CD4-positive, alpha-beta memory T cell (primary cell): ENCODE measurements at regions of chr1 and their contacts with region 1.

Region 1: DNA sequence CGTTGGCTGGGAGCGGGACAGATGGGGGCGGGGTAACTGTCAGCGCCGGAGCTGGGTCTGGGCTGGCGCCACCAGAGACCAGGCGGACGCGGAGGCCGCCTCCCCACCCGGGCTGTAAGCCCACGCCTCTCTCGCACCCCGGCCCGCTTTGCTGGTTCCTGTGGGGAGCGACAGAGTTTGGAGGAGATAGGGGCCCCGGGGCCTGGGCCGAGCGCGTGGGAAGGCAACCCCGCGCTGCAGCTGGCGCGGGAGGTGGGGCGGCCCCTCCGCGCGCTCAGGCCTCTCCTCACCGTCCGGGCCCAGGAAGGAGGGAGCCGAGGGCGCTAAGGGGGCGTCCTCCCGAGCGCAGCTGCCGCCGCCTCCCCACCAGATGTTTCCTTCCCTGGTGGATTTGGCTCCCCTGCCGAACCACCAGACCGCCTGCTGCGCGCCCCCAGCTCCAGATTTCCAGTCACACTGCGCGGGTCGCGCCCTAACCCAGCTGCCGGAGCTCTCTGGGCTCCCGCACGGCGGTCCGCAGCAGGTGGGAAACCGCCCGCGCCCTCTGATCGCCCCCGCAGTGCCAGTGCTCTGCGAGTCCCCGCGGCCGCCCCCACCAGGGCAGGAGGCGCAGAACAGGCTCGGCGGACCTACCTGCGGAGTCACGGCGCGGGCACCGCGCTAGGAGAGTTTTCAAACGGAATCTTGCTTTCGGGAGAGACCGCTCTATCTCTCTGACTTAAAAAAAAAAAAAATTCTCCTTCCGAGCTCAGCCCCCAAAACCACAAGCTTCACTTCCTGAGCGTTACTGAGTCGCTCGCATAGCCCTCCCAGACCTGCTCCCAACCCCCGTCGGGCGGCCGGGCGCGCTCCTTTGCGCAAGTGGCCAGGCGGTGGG is 1.1 kb downstream of the GFI1 start:
- DNase-seq: peak; percentile 73 to 85 (median 77)
- H3K4me3 ChIP-seq: peak overlapping the region; percentile 84 to 92
- H3K4me3 Mint-ChIP-seq: peak overlapping the region; percentile 89 to 97 (median 94)
- H3K27ac ChIP-seq: peak overlapping the region; percentile 52
- H3K27ac Mint-ChIP-seq: peak overlapping the region; percentile 88 to 94 (median 91)
- H3K4me1 ChIP-seq: peaks cover 30% of the 10 kb centered on the region
- H3K4me1 Mint-ChIP-seq: peaks cover 14 to 69% (median 31%) of the 10 kb centered on the region in 4 donors
- H3K27me3 ChIP-seq: no peaks in the 10 kb centered on the region
- H3K27me3 Mint-ChIP-seq: no peaks in the 10 kb centered on the region

Region 2: DNA sequence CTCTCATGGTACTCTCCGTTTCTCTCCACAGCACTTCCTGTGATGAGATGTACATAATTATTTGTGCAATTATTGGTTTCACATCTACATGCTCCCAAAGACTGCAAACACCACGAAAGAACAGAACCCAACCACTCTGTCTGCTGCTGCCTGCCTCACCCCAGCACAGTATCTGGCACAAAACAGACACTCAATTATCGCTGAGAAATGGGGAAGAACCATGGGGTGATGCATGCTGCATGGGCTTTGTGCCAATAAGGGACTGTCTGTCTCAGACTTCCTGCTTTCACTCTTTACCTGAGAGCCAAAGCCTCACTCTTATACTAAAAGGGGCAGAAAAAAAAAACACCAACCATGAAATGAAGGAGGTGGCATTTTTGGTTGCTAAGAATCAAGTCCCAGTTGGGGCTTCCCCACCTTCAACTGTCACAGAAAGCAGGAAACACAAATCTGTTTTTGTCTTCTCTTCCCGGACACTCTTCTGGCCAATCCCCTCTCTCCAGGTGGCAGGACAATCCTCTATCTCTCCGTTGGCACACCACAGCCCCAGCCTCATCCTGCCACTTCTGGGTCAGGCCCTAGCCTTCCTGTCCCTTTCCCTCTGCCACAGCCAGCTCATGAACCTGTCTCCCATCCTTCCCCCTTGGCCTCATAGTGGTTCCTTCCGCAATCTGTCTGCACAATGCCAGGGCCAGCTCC is 681.6 kb before region 1 on chr1:
- CTCF ChIA-PET with region 1: no interaction called
- POLR2A ChIA-PET with region 1: interaction called, 3 read pairs
- intact Hi-C with region 1: loop called (anchors 10 kb)
- DNase-seq: peak; percentile 87 to 92 (median 89)
- H3K4me3 ChIP-seq: peak overlapping the region; percentile 27 to 61
- H3K4me3 Mint-ChIP-seq: peak overlapping the region; percentile 73 to 90 (median 80)
- H3K27ac ChIP-seq: peak overlapping the region; percentile 98
- H3K27ac Mint-ChIP-seq: peak overlapping the region; percentile 97 to 100 (median 100)
- H3K4me1 ChIP-seq: peaks cover 49% of the 10 kb centered on the region
- H3K4me1 Mint-ChIP-seq: peaks cover 44 to 66% (median 51%) of the 10 kb centered on the region in 4 donors
- H3K27me3 ChIP-seq: no peaks in the 10 kb centered on the region
- H3K27me3 Mint-ChIP-seq: no peaks in the 10 kb centered on the region

Region 3: DNA sequence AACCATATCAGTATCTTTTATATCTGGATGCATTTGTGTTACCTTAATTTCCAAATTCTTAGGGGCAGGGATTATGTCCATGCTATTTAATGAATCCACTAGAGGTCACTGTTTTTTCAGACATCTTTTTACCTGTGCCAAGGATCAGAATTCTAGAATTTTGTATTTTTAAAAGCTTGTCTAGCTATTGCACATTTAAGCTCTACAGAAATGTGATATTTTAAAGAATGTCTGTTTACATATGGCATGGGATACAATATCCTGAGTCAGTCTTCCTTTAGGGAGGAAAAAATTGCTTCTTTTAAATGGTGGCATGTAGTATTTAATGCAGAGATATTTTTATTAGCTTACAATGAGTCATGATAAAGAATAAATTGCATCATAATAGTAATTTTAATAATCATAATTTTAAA is 175.4 kb before region 1 on chr1:
- CTCF ChIA-PET with region 1: interaction called, 135 read pairs
- POLR2A ChIA-PET with region 1: interaction called, 154 read pairs
- intact Hi-C with region 1: no loop called
- DNase-seq: peak in 4 of 5 donors; percentile 34 to 44 (median 40)
- H3K4me3 ChIP-seq: no peak overlapping the region
- H3K4me3 Mint-ChIP-seq: peak overlapping the region in 1 of 8 donors; percentile 36
- H3K27ac ChIP-seq: no peak overlapping the region
- H3K27ac Mint-ChIP-seq: peak overlapping the region in 2 of 7 donors; percentile 47 to 72
- H3K4me1 ChIP-seq: peaks cover 32% of the 10 kb centered on the region
- H3K4me1 Mint-ChIP-seq: peaks cover 21 to 37% (median 31%) of the 10 kb centered on the region in 4 donors
- H3K27me3 ChIP-seq: no peaks in the 10 kb centered on the region
- H3K27me3 Mint-ChIP-seq: no peaks in the 10 kb centered on the region

Region 4: GRCh38 chr1:92447033-92447681 is 38.5 kb before region 1 on chr1:
- CTCF ChIA-PET with region 1: no interaction called
- POLR2A ChIA-PET with region 1: no interaction called
- intact Hi-C with region 1: no loop called
- DNase-seq: no peak
- H3K4me3 ChIP-seq: no peak overlapping the region
- H3K4me3 Mint-ChIP-seq: no peak overlapping the region
- H3K27ac ChIP-seq: no peak overlapping the region
- H3K27ac Mint-ChIP-seq: peak overlapping the region in 1 of 7 donors; percentile 33
- H3K4me1 ChIP-seq: no peaks in the 10 kb centered on the region
- H3K4me1 Mint-ChIP-seq: peaks cover 2 to 9% (median 6%) of the 10 kb centered on the region in 4 donors
- H3K27me3 ChIP-seq: no peaks in the 10 kb centered on the region
- H3K27me3 Mint-ChIP-seq: no peaks in the 10 kb centered on the region

Region 5: DNA sequence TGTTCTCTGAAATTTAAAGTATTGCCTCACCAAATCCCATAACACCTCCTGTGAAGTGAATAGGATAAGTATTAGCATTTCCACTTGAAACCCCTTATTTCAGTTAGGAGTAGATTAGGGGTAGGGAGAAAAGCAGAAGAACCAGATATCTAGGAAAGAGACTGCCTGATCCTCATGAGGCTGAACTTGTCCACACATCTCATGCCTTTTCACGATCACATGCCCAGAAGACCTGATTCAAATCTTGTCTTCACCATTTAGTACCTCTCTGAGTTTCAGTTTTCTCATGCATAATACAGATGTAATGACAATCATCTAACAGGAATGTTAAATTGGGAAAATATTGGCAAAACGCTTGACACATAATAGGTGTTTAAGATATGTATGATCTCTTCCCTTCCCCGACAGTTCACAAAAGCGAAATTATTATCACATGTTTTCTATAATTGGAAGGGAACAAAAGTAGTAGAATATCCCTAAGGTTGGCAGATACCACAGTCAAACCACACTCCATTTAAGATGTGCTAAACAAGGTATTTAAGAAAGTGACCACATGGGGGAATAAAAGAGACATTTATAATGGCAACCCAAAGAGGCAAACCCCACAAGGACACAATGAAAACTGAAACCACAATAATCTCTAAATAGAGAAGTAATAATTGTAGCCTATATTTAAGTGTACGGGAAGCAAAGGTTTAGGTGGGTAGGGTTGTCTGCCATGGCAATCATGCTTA is 24.1 kb before region 1 on chr1:
- CTCF ChIA-PET with region 1: interaction called, 7 read pairs
- POLR2A ChIA-PET with region 1: interaction called, 14 read pairs
- intact Hi-C with region 1: no loop called
- DNase-seq: no peak
- H3K4me3 ChIP-seq: no peak overlapping the region
- H3K4me3 Mint-ChIP-seq: peak overlapping the region in 1 of 8 donors; percentile 50
- H3K27ac ChIP-seq: no peak overlapping the region
- H3K27ac Mint-ChIP-seq: no peak overlapping the region
- H3K4me1 ChIP-seq: peaks cover 33% of the 10 kb centered on the region
- H3K4me1 Mint-ChIP-seq: peaks cover 26 to 54% (median 34%) of the 10 kb centered on the region in 4 donors
- H3K27me3 ChIP-seq: no peaks in the 10 kb centered on the region
- H3K27me3 Mint-ChIP-seq: no peaks in the 10 kb centered on the region

Region 6: GRCh38 chr1:92536980-92537884 is 51.6 kb after region 1 on chr1:
- CTCF ChIA-PET with region 1: interaction called, 42 read pairs
- POLR2A ChIA-PET with region 1: interaction called, 153 read pairs
- intact Hi-C with region 1: loop called (anchors 1 kb)
- DNase-seq: peak; percentile 70 to 84 (median 75)
- H3K4me3 ChIP-seq: no peak overlapping the region
- H3K4me3 Mint-ChIP-seq: peak overlapping the region; percentile 58 to 83 (median 75)
- H3K27ac ChIP-seq: peak overlapping the region; percentile 46
- H3K27ac Mint-ChIP-seq: peak overlapping the region; percentile 66 to 91 (median 85)
- H3K4me1 ChIP-seq: peaks cover 35% of the 10 kb centered on the region
- H3K4me1 Mint-ChIP-seq: peaks cover 39 to 71% (median 53%) of the 10 kb centered on the region in 4 donors
- H3K27me3 ChIP-seq: no peaks in the 10 kb centered on the region
- H3K27me3 Mint-ChIP-seq: no peaks in the 10 kb centered on the region

Region 7: GRCh38 chr1:92831762-92832536 is 346.3 kb after region 1 on chr1 and contains the start of gene RPL5:
- CTCF ChIA-PET with region 1: no interaction called
- POLR2A ChIA-PET with region 1: interaction called, 5 read pairs
- intact Hi-C with region 1: loop called (anchors 5 kb)
- DNase-seq: peak; percentile 97 to 100 (median 98)
- H3K4me3 ChIP-seq: peak within 1 kb of the TSS; percentile 54 to 100
- H3K4me3 Mint-ChIP-seq: peak within 1 kb of the TSS; percentile 98 to 100 (median 100)
- H3K27ac ChIP-seq: peak within 1 kb of the TSS; percentile 93
- H3K27ac Mint-ChIP-seq: peak within 1 kb of the TSS; percentile 98 to 100 (median 99)
- H3K4me1 ChIP-seq: peaks cover 46% of the 10 kb centered on the region
- H3K4me1 Mint-ChIP-seq: peaks cover 35 to 55% (median 45%) of the 10 kb centered on the region in 4 donors
- H3K27me3 ChIP-seq: no peaks in the 10 kb centered on the region
- H3K27me3 Mint-ChIP-seq: peaks cover 0 to 1% of the 10 kb centered on the region in 2 donors
- total RNA-seq, gene RPL5: 1,501 to 1,588 TPM